ENCODE measurements at regions of chr1 and their contacts with region 1.

Region 1: DNA sequence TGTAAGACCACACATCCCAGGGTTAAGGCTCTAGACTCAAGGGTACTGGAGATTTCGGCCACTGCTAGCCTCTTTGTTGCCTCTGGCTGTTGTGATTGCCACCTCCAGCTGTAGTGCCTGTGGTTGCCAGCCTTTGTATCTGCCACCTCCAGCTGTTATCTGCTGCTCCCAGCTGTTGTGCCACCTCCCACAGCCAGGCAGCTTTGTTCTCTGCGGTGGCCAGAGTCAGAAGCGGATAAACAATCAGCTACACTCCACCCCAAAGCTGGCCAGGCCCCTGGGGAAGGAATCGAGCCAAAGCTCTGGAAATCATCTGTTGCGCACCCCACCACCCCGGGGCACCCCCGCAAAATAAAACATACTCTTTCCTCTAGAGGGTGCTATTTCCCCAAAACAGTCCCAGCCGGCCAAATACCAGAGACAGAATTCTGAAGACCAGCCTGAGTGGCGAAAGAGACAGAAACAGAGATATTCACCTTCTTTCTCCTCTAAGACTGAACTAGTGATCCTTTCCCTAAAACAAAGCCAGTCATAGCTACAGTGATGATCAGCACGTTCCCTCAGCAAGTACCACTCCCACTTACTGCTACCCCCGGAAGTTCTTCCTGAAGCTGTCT is 14.8 kb upstream of the PIGM start:
- DNase-seq: peak in 8 of 14 experiments; percentile 12 to 69 (median 34)
- ATAC-seq: peak; percentile 80
- H3K4me3 ChIP-seq: peak overlapping the region; percentile 34
- H3K4me3 Mint-ChIP-seq: peak overlapping the region; percentile 75
- H3K27ac ChIP-seq: no peak overlapping the region
- H3K27ac Mint-ChIP-seq: no peak overlapping the region
- H3K4me1 ChIP-seq: peaks cover 10% of the 10 kb centered on the region
- H3K4me1 Mint-ChIP-seq: peaks cover 11% of the 10 kb centered on the region
- H3K27me3 ChIP-seq: peaks cover 0 to 2% of the 10 kb centered on the region in 2 experiments
- H3K27me3 Mint-ChIP-seq: peaks cover 28% of the 10 kb centered on the region
- CTCF ChIP-seq: peak; percentile 70

Region 2: GRCh38 chr1:159817276-159818041 is 229.1 kb before region 1 on chr1:
- CTCF ChIA-PET with region 1: no interaction called
- POLR2A ChIA-PET with region 1: no interaction called
- intact Hi-C with region 1: no loop called
- DNase-seq: no peak
- ATAC-seq: no peak
- H3K4me3 ChIP-seq: no peak overlapping the region
- H3K4me3 Mint-ChIP-seq: no peak overlapping the region
- H3K27ac ChIP-seq: no peak overlapping the region
- H3K27ac Mint-ChIP-seq: no peak overlapping the region
- H3K4me1 ChIP-seq: no peaks in the 10 kb centered on the region
- H3K4me1 Mint-ChIP-seq: no peaks in the 10 kb centered on the region
- H3K27me3 ChIP-seq: no peaks in the 10 kb centered on the region
- H3K27me3 Mint-ChIP-seq: no peaks in the 10 kb centered on the region
- CTCF ChIP-seq: no peak

Region 3: GRCh38 chr1:160078512-160079195 is 32.1 kb after region 1 on chr1:
- CTCF ChIA-PET with region 1: interaction called, 12 read pairs
- POLR2A ChIA-PET with region 1: interaction called, 5 read pairs
- intact Hi-C with region 1: loop called in 1 of 2 experiments (anchors 1 kb)
- DNase-seq: peak in 12 of 14 experiments; percentile 33 to 75 (median 52)
- ATAC-seq: peak; percentile 90
- H3K4me3 ChIP-seq: no peak overlapping the region
- H3K4me3 Mint-ChIP-seq: no peak overlapping the region
- H3K27ac ChIP-seq: no peak overlapping the region
- H3K27ac Mint-ChIP-seq: no peak overlapping the region
- H3K4me1 ChIP-seq: peaks cover 4% of the 10 kb centered on the region
- H3K4me1 Mint-ChIP-seq: no peaks in the 10 kb centered on the region
- H3K27me3 ChIP-seq: peaks cover 45 to 60% of the 10 kb centered on the region in 2 experiments
- H3K27me3 Mint-ChIP-seq: peaks cover 84% of the 10 kb centered on the region
- CTCF ChIP-seq: peak; percentile 75

Region 4: GRCh38 chr1:160085686-160086455 is 39.3 kb after region 1 on chr1:
- CTCF ChIA-PET with region 1: interaction called, 21 read pairs
- POLR2A ChIA-PET with region 1: interaction called, 5 read pairs
- intact Hi-C with region 1: loop called (anchors 1 to 2 kb)
- DNase-seq: peak; percentile 66 to 87 (median 73)
- ATAC-seq: peak; percentile 71
- H3K4me3 ChIP-seq: no peak overlapping the region
- H3K4me3 Mint-ChIP-seq: peak overlapping the region; percentile 58
- H3K27ac ChIP-seq: no peak overlapping the region
- H3K27ac Mint-ChIP-seq: peak overlapping the region; percentile 47
- H3K4me1 ChIP-seq: peaks cover 15% of the 10 kb centered on the region
- H3K4me1 Mint-ChIP-seq: peaks cover 22% of the 10 kb centered on the region
- H3K27me3 ChIP-seq: peaks cover 22 to 24% of the 10 kb centered on the region in 2 experiments
- H3K27me3 Mint-ChIP-seq: peaks cover 24% of the 10 kb centered on the region
- CTCF ChIP-seq: peak; percentile 82